ENCODE measurements at regions of chrX and their contacts with region 1.

Region 1: GRCh38 chrX:118495061-118495921 is at the start of gene DOCK11:
- DNase-seq: peak; percentile 78 to 87 (median 86)
- H3K4me3 ChIP-seq: peak within 1 kb of the TSS; percentile 67 to 87 (median 81)
- H3K4me3 Mint-ChIP-seq: peak within 1 kb of the TSS; percentile 98
- H3K27ac ChIP-seq: peak within 1 kb of the TSS; percentile 82 to 88
- H3K27ac Mint-ChIP-seq: peak within 1 kb of the TSS; percentile 93 to 98 (median 96)
- H3K4me1 ChIP-seq: peaks cover 24 to 27% of the 10 kb centered on the region in 2 donors
- H3K4me1 Mint-ChIP-seq: peaks cover 29% of the 10 kb centered on the region
- H3K27me3 ChIP-seq: no peaks in the 10 kb centered on the region
- H3K27me3 Mint-ChIP-seq: peaks cover 0 to 2% (median 1%) of the 10 kb centered on the region in 3 donors
- CTCF ChIP-seq: no peak
- polyA plus RNA-seq, gene DOCK11: 20.8 to 39.7 (median 34.8) TPM

Region 2: DNA sequence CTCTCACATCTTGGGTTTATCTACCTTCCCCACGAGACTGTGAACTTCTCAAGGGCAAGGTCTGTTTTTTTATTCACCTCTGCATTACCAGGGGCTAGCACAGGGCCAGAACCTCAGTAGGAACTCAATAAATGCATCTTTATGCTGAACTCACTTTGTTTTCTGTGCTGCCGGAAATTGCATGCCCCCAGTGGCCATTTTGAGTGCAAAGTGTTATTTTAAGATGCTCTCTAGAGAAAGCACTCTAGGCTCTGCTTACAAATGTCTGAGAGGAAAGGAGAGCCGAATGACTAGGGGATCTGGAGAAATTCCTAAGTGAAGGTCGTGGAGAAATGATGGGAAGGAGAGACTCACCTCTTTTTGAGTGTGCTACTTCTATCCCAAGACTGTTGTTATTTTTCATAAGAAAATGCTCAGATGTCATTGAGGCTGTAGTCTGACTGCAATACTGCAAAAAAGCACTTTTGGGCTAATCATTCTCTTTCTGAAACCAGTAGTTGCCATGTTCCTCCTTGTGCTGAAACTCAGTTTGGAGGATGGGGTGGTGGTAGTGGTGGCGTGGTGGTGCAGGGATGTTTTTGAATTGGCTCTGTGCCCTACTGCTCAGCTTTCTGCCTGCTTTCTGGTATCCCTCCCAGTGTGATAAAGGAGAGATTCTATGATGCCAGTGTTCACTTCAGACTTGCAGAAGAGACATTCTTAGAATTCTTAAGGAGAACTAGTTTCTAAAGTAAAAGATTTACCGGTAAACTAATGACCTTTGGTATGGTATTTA is 41.6 kb after region 1 on chrX:
- intact Hi-C with region 1: loop called in 1 of 2 experiments (anchors 5 kb)
- DNase-seq: peak in 1 of 3 donors; percentile 13
- H3K4me3 ChIP-seq: peak overlapping the region in 1 of 3 experiments; percentile 13
- H3K4me3 Mint-ChIP-seq: peak overlapping the region; percentile 45 to 64
- H3K27ac ChIP-seq: peak overlapping the region in 1 of 2 donors; percentile 60
- H3K27ac Mint-ChIP-seq: peak overlapping the region; percentile 55 to 87 (median 80)
- H3K4me1 ChIP-seq: peaks cover 36 to 38% of the 10 kb centered on the region in 2 donors
- H3K4me1 Mint-ChIP-seq: peaks cover 51% of the 10 kb centered on the region
- H3K27me3 ChIP-seq: no peaks in the 10 kb centered on the region
- H3K27me3 Mint-ChIP-seq: peaks cover 0 to 2% (median 0%) of the 10 kb centered on the region in 3 donors
- CTCF ChIP-seq: peak; percentile 42

Region 3: DNA sequence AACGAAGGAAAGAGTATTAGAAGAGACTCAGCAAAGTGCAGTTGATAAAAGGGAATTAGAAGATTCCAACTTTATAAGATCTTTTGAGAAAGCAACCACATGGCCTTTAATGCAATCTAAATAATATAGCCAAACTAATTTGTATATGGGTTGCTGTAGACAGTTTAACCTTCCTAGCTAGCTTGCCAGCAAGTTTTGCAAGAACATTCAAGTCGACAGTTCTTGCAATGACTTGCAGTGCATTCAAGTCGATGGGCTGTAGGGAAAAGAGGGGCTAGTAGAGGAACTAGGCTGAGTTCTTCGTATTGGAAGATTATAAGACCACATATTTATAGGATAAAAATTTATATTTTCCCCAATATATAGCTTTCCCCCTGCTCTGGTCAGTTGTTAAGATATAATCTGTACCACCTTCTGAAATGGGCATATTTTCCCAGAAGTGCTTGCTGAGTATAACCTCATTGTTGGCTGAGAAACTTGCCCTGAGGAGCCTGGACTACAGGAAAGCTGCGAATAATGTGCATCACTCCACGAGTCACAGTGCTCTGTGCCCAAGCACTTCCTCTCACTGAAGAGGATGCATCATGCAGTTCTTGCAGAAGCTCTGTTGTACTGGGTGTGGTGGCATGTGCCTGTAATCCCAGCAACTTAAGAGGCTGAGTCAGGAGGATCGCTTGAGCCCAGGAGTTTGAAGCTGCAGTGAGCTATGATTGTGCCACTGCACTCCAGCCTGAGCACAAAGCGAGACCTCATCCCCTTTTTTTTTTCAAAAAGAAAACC is 57.0 kb after region 1 on chrX:
- intact Hi-C with region 1: loop called in 1 of 2 experiments (anchors 10 kb)
- DNase-seq: peak; percentile 40 to 65 (median 52)
- H3K4me3 ChIP-seq: no peak overlapping the region
- H3K4me3 Mint-ChIP-seq: no peak overlapping the region
- H3K27ac ChIP-seq: peak overlapping the region in 1 of 2 donors; percentile 7
- H3K27ac Mint-ChIP-seq: peak overlapping the region; percentile 37 to 90 (median 73)
- H3K4me1 ChIP-seq: no peaks in the 10 kb centered on the region
- H3K4me1 Mint-ChIP-seq: peaks cover 5% of the 10 kb centered on the region
- H3K27me3 ChIP-seq: no peaks in the 10 kb centered on the region
- H3K27me3 Mint-ChIP-seq: peaks cover 0 to 5% (median 0%) of the 10 kb centered on the region in 3 donors
- CTCF ChIP-seq: no peak